Calu3 (cell line): ENCODE measurements at regions of chr4 and their contacts with region 1.

Region 1: GRCh38 chr4:147285751-147286150 is 195.1 kb upstream of the EDNRA start:
- DNase-seq: no peak
- H3K4me3 Mint-ChIP-seq: no peak overlapping the region
- H3K27ac Mint-ChIP-seq: no peak overlapping the region
- H3K4me1 Mint-ChIP-seq: peaks cover 23% of the 10 kb centered on the region
- H3K27me3 Mint-ChIP-seq: no peaks in the 10 kb centered on the region
- CTCF ChIP-seq: no peak

Region 2: DNA sequence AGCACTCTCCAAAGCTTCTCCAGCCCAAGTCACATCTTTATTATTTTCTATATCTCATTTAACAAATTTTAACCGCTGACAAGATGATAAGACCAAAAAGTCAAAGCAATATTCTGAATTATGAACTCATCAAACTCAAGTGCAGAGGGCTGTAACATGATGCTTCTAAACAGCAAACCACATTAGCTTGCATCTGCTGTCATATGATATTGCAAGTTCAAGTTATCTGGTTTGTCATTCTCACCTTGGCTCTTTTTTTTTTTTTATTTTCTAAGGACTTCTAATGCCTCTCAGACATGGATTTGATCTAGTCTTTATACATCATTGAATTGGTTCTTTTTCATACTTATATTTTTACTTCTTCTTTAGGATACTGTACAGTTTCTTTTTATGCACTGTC is 857.5 kb before region 1 on chr4:
- CTCF ChIA-PET with region 1: no interaction called
- intact Hi-C with region 1: no loop called
- DNase-seq: no peak
- H3K4me3 Mint-ChIP-seq: no peak overlapping the region
- H3K27ac Mint-ChIP-seq: no peak overlapping the region
- H3K4me1 Mint-ChIP-seq: no peaks in the 10 kb centered on the region
- H3K27me3 Mint-ChIP-seq: no peaks in the 10 kb centered on the region
- CTCF ChIP-seq: no peak

Region 3: GRCh38 chr4:147361726-147362125 is 76.0 kb after region 1 on chr4:
- CTCF ChIA-PET with region 1: no interaction called
- intact Hi-C with region 1: loop called (anchors 5 kb)
- DNase-seq: peak; percentile 59
- H3K4me3 Mint-ChIP-seq: no peak overlapping the region
- H3K27ac Mint-ChIP-seq: peak overlapping the region; percentile 82
- H3K4me1 Mint-ChIP-seq: peaks cover 45% of the 10 kb centered on the region
- H3K27me3 Mint-ChIP-seq: no peaks in the 10 kb centered on the region
- CTCF ChIP-seq: no peak

Region 4: GRCh38 chr4:147378779-147379178 is 93.0 kb after region 1 on chr4:
- CTCF ChIA-PET with region 1: no interaction called
- intact Hi-C with region 1: loop called (anchors 5 kb)
- DNase-seq: peak; percentile 27
- H3K4me3 Mint-ChIP-seq: no peak overlapping the region
- H3K27ac Mint-ChIP-seq: peak overlapping the region; percentile 47
- H3K4me1 Mint-ChIP-seq: no peaks in the 10 kb centered on the region
- H3K27me3 Mint-ChIP-seq: no peaks in the 10 kb centered on the region
- CTCF ChIP-seq: no peak